HEK293 (cell line): ENCODE measurements at regions of chr2 and their contacts with region 1.

Region 1: GRCh38 chr2:22110244-22110651 is 986.5 kb downstream of the TDRD15 start:
- H3K4me3 ChIP-seq: no peak overlapping the region
- H3K27ac ChIP-seq: no peak overlapping the region
- H3K4me1 ChIP-seq: no peaks in the 10 kb centered on the region
- CTCF ChIP-seq: no peak

Region 2: DNA sequence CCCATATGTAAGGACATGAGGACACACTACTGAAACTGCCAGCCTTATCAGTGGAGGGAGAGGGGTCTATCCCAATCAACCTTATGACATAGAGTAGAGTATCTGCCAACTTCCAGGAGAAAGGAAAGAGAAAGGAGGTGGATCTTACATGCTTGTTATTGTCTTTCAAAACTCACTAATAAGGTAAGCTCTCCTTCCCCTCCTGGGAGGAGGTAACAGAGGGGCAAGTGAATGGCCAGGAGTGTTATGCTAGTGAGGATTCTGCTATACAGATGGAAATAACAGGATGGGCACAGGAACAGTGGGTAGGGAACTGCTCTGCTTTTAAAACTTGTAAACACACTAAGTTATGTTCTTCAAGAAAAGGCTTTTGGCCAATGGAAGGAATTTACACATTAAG is 33.6 kb after region 1 on chr2:
- CTCF ChIA-PET with region 1: interaction called, 14 read pairs
- POLR2A ChIA-PET with region 1: no interaction called
- H3K4me3 ChIP-seq: no peak overlapping the region
- H3K27ac ChIP-seq: no peak overlapping the region
- H3K4me1 ChIP-seq: no peaks in the 10 kb centered on the region
- CTCF ChIP-seq: no peak